ENCODE measurements at regions of chr4 and their contacts with region 1.

Region 1: DNA sequence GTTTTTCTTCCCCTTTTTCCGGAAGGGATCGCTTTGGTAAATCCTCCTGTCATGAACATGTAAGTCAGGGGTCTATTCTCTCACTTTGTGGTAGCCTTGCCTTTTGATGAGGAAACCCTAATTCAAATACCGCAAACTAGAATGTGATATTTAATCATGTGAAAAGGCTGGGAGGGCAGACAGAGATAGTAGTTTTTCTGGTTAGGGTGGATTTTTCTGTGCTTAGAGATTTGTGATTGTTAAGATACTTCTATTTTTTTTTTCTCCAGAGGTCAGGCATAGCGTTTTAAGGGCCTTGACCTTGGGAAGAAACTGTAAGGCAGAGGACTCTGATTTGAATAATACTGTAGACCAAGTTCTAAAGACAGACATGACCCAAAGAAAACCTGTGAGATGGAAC is 41.8 kb upstream of the PACRGL start:
- DNase-seq: peak in 1 of 2 experiments; percentile 5
- H3K4me3 ChIP-seq: no peak overlapping the region
- H3K27ac ChIP-seq: no peak overlapping the region
- H3K4me1 ChIP-seq: no peaks in the 10 kb centered on the region
- H3K27me3 ChIP-seq: no peaks in the 10 kb centered on the region
- CTCF ChIP-seq: no peak

Region 2: DNA sequence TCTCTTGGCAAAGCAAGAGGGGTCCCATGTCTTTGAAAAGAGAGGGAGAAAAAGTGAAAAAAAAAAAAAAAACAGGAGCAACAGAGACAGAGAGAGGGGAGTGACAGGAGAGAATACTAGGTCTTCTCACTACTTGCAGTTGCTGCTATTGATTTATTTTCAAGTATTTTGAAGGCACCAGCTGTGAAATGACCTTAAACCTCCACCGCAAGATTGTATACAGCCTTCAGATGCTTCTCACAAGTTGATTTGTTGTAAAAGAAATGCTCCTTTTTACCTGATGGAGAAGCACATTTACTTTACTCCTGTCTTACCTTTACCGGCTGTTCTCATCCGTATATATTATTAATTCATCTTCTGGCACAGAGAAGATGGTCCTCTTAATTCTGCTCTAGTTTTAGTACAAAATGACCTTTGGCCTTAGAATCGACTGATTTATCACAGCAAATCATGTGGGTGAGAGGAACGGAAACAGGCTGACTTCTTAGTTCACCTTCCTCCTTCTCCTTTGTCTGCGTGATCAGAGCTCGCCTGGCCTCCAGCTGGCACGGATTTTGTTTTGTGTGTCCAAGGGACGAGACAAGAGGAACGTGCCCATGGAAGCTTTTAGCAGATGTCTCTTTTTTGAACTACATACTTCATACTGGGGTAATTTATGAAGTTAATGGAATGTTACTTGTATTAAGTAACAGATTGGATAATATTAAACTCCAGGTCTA is 40.6 kb before region 1 on chr4:
- CTCF ChIA-PET with region 1: no interaction called
- POLR2A ChIA-PET with region 1: no interaction called
- intact Hi-C with region 1: loop called (anchors 5 kb)
- DNase-seq: no peak
- H3K4me3 ChIP-seq: no peak overlapping the region
- H3K27ac ChIP-seq: no peak overlapping the region
- H3K4me1 ChIP-seq: no peaks in the 10 kb centered on the region
- H3K27me3 ChIP-seq: no peaks in the 10 kb centered on the region
- CTCF ChIP-seq: no peak

Region 3: DNA sequence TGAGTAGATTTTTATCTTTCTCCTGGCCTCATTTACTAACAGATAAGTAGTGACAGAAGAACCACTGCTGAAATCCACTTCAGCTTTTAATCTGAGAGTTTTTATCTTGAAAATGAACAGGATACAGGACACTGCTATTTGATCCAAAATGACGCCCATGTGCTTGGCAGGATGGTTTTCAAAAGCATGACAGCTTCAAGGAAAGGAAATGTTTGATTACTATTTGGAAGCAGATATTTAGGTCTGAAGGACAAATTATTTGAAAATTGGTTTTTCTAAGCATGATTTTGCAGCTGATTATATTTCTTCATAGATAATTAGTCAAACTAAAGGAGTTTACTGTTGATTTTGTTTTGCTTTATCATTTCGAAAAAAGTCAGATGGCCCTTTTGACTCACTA is 52.9 kb after region 1 on chr4:
- CTCF ChIA-PET with region 1: no interaction called
- POLR2A ChIA-PET with region 1: no interaction called
- intact Hi-C with region 1: no loop called
- DNase-seq: no peak
- H3K4me3 ChIP-seq: no peak overlapping the region
- H3K27ac ChIP-seq: no peak overlapping the region
- H3K4me1 ChIP-seq: no peaks in the 10 kb centered on the region
- H3K27me3 ChIP-seq: no peaks in the 10 kb centered on the region
- CTCF ChIP-seq: no peak

Measured in PC-9 (cell line).